ENCODE measurements at regions of chr18 and their contacts with region 1.

Region 1: GRCh38 chr18:56702946-56703345 is 51.8 kb downstream of the WDR7 start:
- DNase-seq: no peak
- H3K4me3 ChIP-seq: no peak overlapping the region
- H3K27ac ChIP-seq: no peak overlapping the region
- H3K4me1 ChIP-seq: no peaks in the 10 kb centered on the region
- H3K27me3 ChIP-seq: no peaks in the 10 kb centered on the region
- CTCF ChIP-seq: peak in 2 of 3 experiments; percentile 37 to 42; a peak in 2 of 4 replicates
- EP300 ChIP-seq: no peak
- POLR2A ChIP-seq: no peak
- RAD21 ChIP-seq: peak; percentile 54

Region 2: DNA sequence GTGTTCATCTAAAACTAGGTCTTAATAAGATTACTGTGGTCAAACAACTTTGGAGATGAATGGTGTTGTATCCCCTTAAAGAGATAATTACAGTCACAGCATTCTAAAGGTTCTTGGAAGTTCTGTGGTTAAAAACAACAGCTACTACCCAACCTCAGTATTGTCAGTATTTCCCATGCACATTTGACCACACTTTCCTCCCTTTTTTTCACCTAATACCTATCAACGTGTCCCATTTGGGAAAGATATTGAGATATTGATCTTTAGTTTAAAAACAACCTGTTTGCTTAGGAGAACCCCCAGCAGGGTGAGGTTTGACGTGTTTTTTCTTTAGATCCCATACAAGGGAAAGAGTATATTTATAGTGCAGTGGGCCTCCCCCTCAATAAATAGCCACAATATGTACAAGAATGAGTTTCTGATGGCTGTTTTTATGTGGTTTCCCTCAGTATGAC is 13.8 kb after region 1 on chr18:
- CTCF ChIA-PET with region 1: interaction called, 25 read pairs
- POLR2A ChIA-PET with region 1: interaction called, 3 read pairs
- DNase-seq: no peak
- H3K4me3 ChIP-seq: no peak overlapping the region
- H3K27ac ChIP-seq: no peak overlapping the region
- H3K4me1 ChIP-seq: no peaks in the 10 kb centered on the region
- H3K27me3 ChIP-seq: no peaks in the 10 kb centered on the region
- CTCF ChIP-seq: no peak
- EP300 ChIP-seq: no peak
- POLR2A ChIP-seq: no peak
- RAD21 ChIP-seq: no peak

Measured in H1 (cell line).